Heart right ventricle (tissue), 16 donors: ENCODE measurements at regions of chr6 and their contacts with region 1.

Region 1: DNA sequence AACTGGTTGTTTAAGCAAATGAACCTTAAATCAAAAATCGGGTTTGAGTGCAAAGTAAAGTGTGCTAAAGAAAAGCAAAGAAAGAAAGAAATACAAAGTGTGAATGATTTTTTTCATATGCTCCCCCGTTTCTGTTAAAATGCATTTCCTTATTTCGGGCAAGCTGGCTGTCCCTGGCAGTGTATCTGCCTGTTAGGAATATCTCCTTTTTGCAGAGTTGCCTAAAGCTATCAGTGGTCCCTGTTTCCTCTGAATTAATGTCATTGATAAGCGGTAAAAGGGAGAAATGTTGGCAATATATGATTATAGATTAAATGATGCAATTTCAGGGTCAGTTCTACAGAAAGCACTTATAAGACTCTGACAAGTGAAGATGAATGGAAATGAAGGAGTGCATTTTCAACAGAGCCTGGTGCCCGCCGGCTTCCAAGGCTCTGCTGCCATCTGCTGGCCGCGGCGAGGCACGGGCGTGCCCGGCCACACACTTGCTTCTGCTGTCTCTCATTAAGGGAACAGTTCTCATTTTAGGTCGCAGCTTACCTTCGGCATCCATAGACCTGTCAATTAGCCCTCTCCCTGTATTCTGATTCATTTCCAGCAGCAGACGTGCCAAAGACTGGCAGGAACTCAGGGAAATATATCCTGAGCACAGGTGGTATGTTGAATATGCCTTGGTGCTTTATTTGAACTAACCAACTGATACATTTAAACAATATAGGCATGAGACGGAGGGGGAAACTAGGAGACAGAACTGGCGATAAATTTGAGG is 381.9 kb downstream of the C6orf118 start:
- DNase-seq: peak; percentile 48 to 74
- ATAC-seq: peak; percentile 83 to 96 (median 92)
- H3K4me3 ChIP-seq: peak overlapping the region in 3 of 10 donors; percentile 10 to 18 (median 14)
- H3K27ac ChIP-seq: no peak overlapping the region
- H3K4me1 ChIP-seq: peaks cover 0 to 13% (median 7%) of the 10 kb centered on the region in 9 donors
- H3K27me3 ChIP-seq: no peaks in the 10 kb centered on the region
- CTCF ChIP-seq: peak; percentile 94 to 100 (median 97)

Region 2: GRCh38 chr6:164359441-164359840 is 568.0 kb before region 1 on chr6:
- intact Hi-C with region 1: loop called in 1 of 10 experiments (anchors 10 kb)
- DNase-seq: no peak
- ATAC-seq: no peak
- H3K4me3 ChIP-seq: no peak overlapping the region
- H3K27ac ChIP-seq: no peak overlapping the region
- H3K4me1 ChIP-seq: no peaks in the 10 kb centered on the region
- H3K27me3 ChIP-seq: no peaks in the 10 kb centered on the region
- CTCF ChIP-seq: no peak

Region 3: DNA sequence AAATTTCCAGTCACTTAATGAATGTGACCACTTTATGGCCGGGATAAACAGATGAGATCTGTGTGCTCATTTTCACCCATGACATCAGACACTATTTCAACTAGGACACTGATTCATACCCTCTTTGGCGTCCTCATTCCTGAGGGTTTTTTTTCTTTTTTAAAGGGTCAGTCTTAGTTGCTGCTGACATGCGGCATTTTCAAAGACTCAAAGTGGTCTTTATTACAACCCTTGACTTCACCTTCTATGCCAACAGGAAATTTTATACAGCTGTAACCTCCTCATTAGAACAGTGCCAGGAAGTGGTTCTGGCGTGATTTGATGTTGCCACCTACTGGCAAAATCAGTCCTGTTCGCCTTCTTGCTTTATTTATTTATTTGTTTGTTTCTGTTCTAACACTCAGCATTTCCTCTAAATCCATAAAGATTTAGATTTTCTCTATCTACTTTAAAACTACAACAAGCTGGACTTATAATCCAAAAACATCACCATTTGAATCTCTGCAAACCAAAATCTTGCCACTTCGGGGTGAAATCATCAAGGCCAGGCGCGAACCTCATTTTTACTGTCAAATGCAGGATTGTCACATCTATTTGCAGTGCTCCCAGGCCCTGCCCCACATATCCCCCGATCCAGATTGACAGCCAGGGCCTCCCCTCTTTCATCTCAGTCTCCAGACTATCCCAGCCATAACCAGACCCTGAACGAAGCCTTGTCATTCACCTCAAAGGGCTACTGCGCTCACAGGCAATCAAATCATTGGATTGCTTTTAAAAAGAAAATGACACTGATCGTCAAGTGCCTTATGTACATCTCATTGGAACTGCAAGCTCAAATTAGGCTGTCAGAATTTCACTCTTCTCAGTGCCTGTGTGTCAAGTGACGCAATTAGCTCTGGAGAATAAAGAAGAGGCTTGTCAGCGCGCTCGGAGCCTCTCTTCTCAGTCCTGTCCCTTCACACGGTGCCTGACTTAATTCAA is 304.4 kb after region 1 on chr6:
- intact Hi-C with region 1: loop called in 2 of 10 experiments (anchors 5 to 10 kb)
- DNase-seq: peak in 1 of 2 donors; percentile 22
- ATAC-seq: peak; percentile 52 to 93 (median 85)
- H3K4me3 ChIP-seq: peak overlapping the region in 1 of 10 donors; percentile 35
- H3K27ac ChIP-seq: peak overlapping the region in 4 of 10 donors; percentile 16 to 55 (median 41)
- H3K4me1 ChIP-seq: peaks cover 0 to 10% (median 0%) of the 10 kb centered on the region in 9 donors
- H3K27me3 ChIP-seq: no peaks in the 10 kb centered on the region
- CTCF ChIP-seq: peak; percentile 20 to 72 (median 55)

Region 4: GRCh38 chr6:166474721-166475565 is 1547.5 kb after region 1 on chr6:
- intact Hi-C with region 1: no loop called
- DNase-seq: no peak
- ATAC-seq: no peak
- H3K4me3 ChIP-seq: no peak overlapping the region
- H3K27ac ChIP-seq: no peak overlapping the region
- H3K4me1 ChIP-seq: no peaks in the 10 kb centered on the region
- H3K27me3 ChIP-seq: no peaks in the 10 kb centered on the region
- CTCF ChIP-seq: no peak